ENCODE measurements at regions of chr14 and their contacts with region 1.

Region 1: DNA sequence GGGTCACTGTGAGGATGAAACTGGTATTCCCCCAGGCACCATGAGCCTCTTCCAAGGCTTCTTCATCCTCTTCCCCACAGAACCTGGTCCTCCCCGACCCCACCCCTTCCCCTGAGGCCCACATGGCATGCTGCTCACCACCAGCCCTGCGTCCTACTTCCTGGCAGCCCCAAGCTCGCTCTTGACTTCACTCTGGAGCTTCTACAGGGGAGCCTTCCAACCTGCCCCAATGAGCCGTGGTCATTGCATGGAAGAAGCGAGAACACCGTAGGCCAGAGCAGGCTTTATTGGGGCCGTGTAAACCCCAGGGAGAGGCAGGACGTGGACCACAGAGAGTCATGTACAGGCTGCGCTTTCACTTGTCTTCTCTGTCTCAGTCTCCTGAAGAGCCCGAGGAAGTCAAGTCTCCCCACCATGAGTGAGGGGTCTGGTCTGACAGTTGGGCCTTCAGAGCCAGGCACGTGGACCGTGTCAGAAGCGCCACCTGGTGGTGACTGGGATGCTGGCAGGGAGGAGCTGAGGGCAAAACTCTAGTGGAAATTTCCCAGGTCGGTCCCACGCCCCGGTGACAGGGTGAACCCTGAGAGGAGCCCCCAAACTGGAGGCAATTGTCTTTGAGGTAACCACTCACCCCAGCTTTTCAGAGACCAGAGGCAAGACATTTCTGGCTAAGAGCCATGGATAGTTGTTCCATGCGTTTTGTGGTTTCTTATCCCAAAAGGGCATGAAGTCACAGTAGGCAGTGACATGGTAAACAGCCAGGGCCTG is 17.5 kb downstream of the RPS6KL1 start:
- DNase-seq: peak; percentile 76 to 93 (median 91)
- ATAC-seq: peak; percentile 42 to 45
- H3K4me3 ChIP-seq: no peak overlapping the region
- H3K27ac ChIP-seq: no peak overlapping the region
- H3K4me1 ChIP-seq: peaks cover 22% of the 10 kb centered on the region
- H3K27me3 ChIP-seq: no peaks in the 10 kb centered on the region

Region 2: DNA sequence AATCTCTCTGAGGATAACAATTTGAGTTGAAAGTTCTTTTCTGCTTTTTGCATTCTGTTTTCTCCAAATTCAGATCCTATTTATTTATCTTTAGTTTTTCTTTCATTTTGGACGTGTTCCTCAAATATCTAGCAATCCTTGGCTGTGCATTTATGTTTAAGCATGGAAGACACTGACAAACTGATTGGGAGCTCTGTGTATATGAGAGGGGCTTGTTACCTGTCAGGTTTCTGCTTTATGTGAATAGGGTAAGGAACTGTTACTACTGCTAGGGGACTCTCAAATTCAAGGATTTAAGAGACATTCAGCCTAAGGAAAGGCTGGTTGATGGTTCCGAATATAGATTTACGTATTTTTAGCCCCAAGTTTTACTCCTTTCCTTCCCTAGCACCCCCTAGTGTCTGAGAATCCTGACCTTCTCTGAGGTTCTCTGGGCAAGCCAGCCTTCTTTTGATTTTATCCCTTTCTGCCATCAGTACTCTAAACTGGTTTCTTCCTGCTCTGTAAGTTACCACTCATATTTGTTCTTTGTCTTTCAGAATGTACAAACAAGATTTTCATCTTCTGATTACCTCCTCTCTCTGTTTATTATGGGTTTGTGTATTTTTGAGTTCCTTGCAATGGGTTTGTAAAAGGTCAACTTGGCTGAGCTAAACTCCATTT is 111.9 kb before region 1 on chr14:
- intact Hi-C with region 1: no loop called
- DNase-seq: no peak
- ATAC-seq: peak in 1 of 2 donors; percentile 21
- H3K4me3 ChIP-seq: no peak overlapping the region
- H3K27ac ChIP-seq: no peak overlapping the region
- H3K4me1 ChIP-seq: peaks cover 4% of the 10 kb centered on the region
- H3K27me3 ChIP-seq: no peaks in the 10 kb centered on the region

Region 3: GRCh38 chr14:74860906-74861733 is 44.4 kb before region 1 on chr14:
- intact Hi-C with region 1: loop called in 3 of 4 experiments (anchors 5 kb)
- DNase-seq: peak; percentile 89 to 97 (median 94)
- ATAC-seq: peak; percentile 75 to 82
- H3K4me3 ChIP-seq: no peak overlapping the region
- H3K27ac ChIP-seq: no peak overlapping the region
- H3K4me1 ChIP-seq: no peaks in the 10 kb centered on the region
- H3K27me3 ChIP-seq: no peaks in the 10 kb centered on the region

Region 4: GRCh38 chr14:74955229-74956026 is 49.9 kb after region 1 on chr14 and contains the start of gene PGF:
- intact Hi-C with region 1: no loop called
- DNase-seq: peak; percentile 76 to 91 (median 90)
- ATAC-seq: peak; percentile 78 to 80
- H3K4me3 ChIP-seq: peak within 1 kb of the TSS; percentile 48
- H3K27ac ChIP-seq: no peak within 1 kb of the TSS
- H3K4me1 ChIP-seq: no peaks in the 10 kb centered on the region
- H3K27me3 ChIP-seq: no peaks in the 10 kb centered on the region
- total RNA-seq, gene PGF: 2.9 to 5.9 (median 4.1) TPM

Region 5: DNA sequence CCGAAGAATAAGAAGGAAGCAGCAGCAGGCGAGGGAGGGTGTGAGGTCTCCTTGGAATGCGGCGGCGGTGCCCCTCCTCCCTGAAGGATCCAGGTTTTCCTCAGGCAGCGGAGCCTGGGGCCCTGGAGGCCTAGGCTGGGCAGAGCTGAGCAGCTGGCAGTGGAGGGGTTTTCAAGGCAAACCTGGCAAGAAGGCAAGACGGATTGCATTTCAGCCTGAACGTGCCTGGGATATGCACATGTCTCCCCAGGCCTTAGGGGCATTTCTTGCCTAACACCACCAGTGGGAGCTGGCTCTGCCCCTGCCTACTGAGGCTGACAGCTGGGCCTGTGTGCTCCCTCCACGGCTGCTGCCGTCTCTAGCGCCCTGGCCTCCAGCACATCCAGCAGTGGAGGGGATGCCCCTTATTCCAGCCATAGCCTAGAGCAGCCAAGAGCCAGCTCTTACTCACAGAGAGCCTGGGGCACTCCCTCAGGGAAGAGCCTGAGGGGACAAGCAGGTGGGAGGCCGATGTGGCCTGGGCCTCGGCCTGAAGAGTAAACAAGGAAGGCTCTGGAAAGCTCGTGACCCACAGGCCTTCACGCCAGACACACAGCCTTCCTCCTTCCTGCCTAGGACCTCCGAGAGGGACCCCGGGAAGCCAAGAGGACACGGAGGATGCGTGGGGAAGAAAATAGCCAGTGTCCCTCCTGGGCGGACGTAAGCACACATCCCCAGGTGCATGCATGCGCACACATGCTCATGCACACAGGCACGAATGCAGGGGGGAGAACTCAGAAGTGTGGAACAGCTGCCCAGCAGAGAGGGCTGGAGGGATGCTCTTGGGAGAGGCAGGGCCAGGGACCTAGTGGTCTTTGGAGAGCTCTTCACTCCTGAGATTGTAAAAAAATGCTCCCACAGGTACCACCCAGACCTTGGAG is 74.1 kb after region 1 on chr14:
- intact Hi-C with region 1: no loop called
- DNase-seq: peak; percentile 60 to 80 (median 76)
- ATAC-seq: peak; percentile 37 to 47
- H3K4me3 ChIP-seq: no peak overlapping the region
- H3K27ac ChIP-seq: no peak overlapping the region
- H3K4me1 ChIP-seq: peaks cover 11% of the 10 kb centered on the region
- H3K27me3 ChIP-seq: no peaks in the 10 kb centered on the region